Activated B cell treated with CpG ODN at 0.5 μM for 24 hours (primary cell): ENCODE measurements at regions of chr11 and their contacts with region 1.

Region 1: GRCh38 chr11:130002846-130003716 is 446 bp upstream of the PRDM10 start:
- DNase-seq: peak; percentile 81
- ATAC-seq: peak; percentile 71
- H3K4me3 Mint-ChIP-seq: peak overlapping the region; percentile 99
- H3K27ac Mint-ChIP-seq: peak overlapping the region; percentile 100
- H3K4me1 Mint-ChIP-seq: peaks cover 29% of the 10 kb centered on the region
- H3K27me3 Mint-ChIP-seq: peaks cover 4% of the 10 kb centered on the region
- CTCF ChIP-seq: no peak

Region 2: GRCh38 chr11:129853518-129854236 is 149.4 kb before region 1 on chr11:
- CTCF ChIA-PET with region 1: no interaction called
- POLR2A ChIA-PET with region 1: no interaction called
- intact Hi-C with region 1: no loop called
- DNase-seq: no peak
- ATAC-seq: no peak
- H3K4me3 Mint-ChIP-seq: no peak overlapping the region
- H3K27ac Mint-ChIP-seq: no peak overlapping the region
- H3K4me1 Mint-ChIP-seq: no peaks in the 10 kb centered on the region
- H3K27me3 Mint-ChIP-seq: peaks cover 2% of the 10 kb centered on the region
- CTCF ChIP-seq: no peak

Region 3: DNA sequence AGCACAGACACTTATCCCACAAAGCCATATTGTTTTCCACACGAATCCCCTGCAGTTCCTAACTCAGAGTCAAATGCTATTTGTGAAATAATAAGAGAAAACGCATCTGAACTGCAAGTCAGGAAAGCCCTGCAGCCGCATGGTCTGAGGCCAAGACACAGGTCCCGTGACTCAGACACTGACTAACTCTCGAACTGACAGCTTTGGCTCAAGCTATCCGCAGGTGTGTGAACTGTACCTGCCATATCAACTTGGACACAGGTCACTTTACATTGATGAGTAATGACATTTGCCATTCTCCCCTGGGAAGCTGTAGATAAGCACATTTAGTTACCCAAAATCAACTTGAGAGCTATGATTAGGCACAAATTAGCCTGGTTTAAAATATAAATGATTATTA is 72.8 kb before region 1 on chr11:
- CTCF ChIA-PET with region 1: no interaction called
- POLR2A ChIA-PET with region 1: interaction called, 13 read pairs
- intact Hi-C with region 1: no loop called
- DNase-seq: no peak
- ATAC-seq: no peak
- H3K4me3 Mint-ChIP-seq: no peak overlapping the region
- H3K27ac Mint-ChIP-seq: no peak overlapping the region
- H3K4me1 Mint-ChIP-seq: no peaks in the 10 kb centered on the region
- H3K27me3 Mint-ChIP-seq: no peaks in the 10 kb centered on the region
- CTCF ChIP-seq: no peak

Region 4: GRCh38 chr11:129992161-129992944 is 10.7 kb before region 1 on chr11:
- CTCF ChIA-PET with region 1: interaction called, 6 read pairs
- POLR2A ChIA-PET with region 1: interaction called, 19 read pairs
- intact Hi-C with region 1: loop called (anchors 1 kb)
- DNase-seq: no peak
- ATAC-seq: peak; percentile 71
- H3K4me3 Mint-ChIP-seq: no peak overlapping the region
- H3K27ac Mint-ChIP-seq: no peak overlapping the region
- H3K4me1 Mint-ChIP-seq: peaks cover 7% of the 10 kb centered on the region
- H3K27me3 Mint-ChIP-seq: no peaks in the 10 kb centered on the region
- CTCF ChIP-seq: no peak

Region 5: GRCh38 chr11:130069684-130070108 is 66.6 kb after region 1 on chr11 and contains the start of gene APLP2:
- CTCF ChIA-PET with region 1: interaction called, 5 read pairs
- POLR2A ChIA-PET with region 1: interaction called, 59 read pairs
- intact Hi-C with region 1: loop called (anchors 1 kb)
- DNase-seq: peak; percentile 92
- ATAC-seq: peak; percentile 94
- H3K4me3 Mint-ChIP-seq: peak within 1 kb of the TSS; percentile 92
- H3K27ac Mint-ChIP-seq: peak within 1 kb of the TSS; percentile 83
- H3K4me1 Mint-ChIP-seq: peaks cover 36% of the 10 kb centered on the region
- H3K27me3 Mint-ChIP-seq: peaks cover 8% of the 10 kb centered on the region
- CTCF ChIP-seq: no peak
- total RNA-seq, gene APLP2: 47.7 and 50.8 TPM in 2 replicates

Region 6: GRCh38 chr11:130103296-130103814 is 100.3 kb after region 1 on chr11:
- CTCF ChIA-PET with region 1: no interaction called
- POLR2A ChIA-PET with region 1: no interaction called
- intact Hi-C with region 1: no loop called
- DNase-seq: no peak
- ATAC-seq: no peak
- H3K4me3 Mint-ChIP-seq: no peak overlapping the region
- H3K27ac Mint-ChIP-seq: no peak overlapping the region
- H3K4me1 Mint-ChIP-seq: peaks cover 31% of the 10 kb centered on the region
- H3K27me3 Mint-ChIP-seq: no peaks in the 10 kb centered on the region
- CTCF ChIP-seq: no peak

Region 7: DNA sequence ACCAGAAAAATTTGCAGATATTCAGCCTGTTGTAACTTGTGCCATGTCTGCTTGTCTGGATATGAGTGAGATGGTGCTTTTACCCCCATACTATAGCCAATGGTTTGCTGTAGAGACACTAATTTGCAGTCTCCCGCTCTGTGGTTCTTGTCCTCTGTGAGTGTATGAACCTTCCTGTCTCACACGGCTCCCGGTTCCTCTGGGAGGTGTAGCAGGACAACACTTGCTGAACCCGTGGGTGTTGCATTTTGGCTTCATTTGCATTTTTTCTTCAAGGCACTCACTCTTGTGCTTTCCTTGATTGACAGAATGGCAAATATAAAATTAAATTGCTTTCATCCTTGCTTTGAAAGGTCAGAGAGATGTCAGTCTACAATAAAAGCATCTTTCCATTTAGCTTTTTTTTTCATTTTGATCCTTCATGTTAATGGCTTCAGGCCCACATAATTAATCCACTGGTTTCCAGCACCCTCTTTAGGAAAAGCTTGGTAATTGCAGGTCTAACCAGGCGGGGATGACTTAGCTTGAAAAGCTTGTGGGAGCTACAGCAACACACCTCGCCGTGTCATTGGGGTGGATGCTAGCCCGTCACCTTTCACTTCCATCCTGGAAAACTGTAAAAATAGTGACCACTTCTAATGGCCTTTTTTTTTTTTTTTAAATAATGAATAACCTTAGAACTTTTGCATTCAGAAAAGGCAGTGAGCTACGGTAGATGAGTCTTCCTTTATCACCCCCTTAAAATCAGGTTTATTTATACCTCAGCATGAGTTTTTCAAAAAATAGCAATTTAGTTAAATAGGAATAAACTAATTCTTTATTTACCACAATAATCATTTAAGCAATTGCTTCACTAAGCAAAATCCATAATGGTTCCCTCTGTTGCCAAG is 129.1 kb after region 1 on chr11:
- CTCF ChIA-PET with region 1: interaction called, 18 read pairs
- POLR2A ChIA-PET with region 1: interaction called, 25 read pairs
- intact Hi-C with region 1: loop called (anchors 2 kb)
- DNase-seq: no peak
- ATAC-seq: peak; percentile 87
- H3K4me3 Mint-ChIP-seq: no peak overlapping the region
- H3K27ac Mint-ChIP-seq: no peak overlapping the region
- H3K4me1 Mint-ChIP-seq: peaks cover 19% of the 10 kb centered on the region
- H3K27me3 Mint-ChIP-seq: no peaks in the 10 kb centered on the region
- CTCF ChIP-seq: peak; percentile 56

Region 8: GRCh38 chr11:130314750-130315285 is 311.7 kb after region 1 on chr11 and contains the start of gene ZBTB44:
- CTCF ChIA-PET with region 1: no interaction called
- POLR2A ChIA-PET with region 1: interaction called, 6 read pairs
- intact Hi-C with region 1: loop called (anchors 1 kb)
- DNase-seq: peak; percentile 76
- ATAC-seq: peak; percentile 78
- H3K4me3 Mint-ChIP-seq: peak within 1 kb of the TSS; percentile 89
- H3K27ac Mint-ChIP-seq: peak within 1 kb of the TSS; percentile 95
- H3K4me1 Mint-ChIP-seq: peaks cover 36% of the 10 kb centered on the region
- H3K27me3 Mint-ChIP-seq: no peaks in the 10 kb centered on the region
- CTCF ChIP-seq: no peak
- total RNA-seq, gene ZBTB44: 49.0 and 61.5 TPM in 2 replicates

Region 9: GRCh38 chr11:130527636-130528297 is 524.7 kb after region 1 on chr11:
- CTCF ChIA-PET with region 1: no interaction called
- POLR2A ChIA-PET with region 1: no interaction called
- intact Hi-C with region 1: no loop called
- DNase-seq: no peak
- ATAC-seq: no peak
- H3K4me3 Mint-ChIP-seq: no peak overlapping the region
- H3K27ac Mint-ChIP-seq: no peak overlapping the region
- H3K4me1 Mint-ChIP-seq: no peaks in the 10 kb centered on the region
- H3K27me3 Mint-ChIP-seq: peaks cover 5% of the 10 kb centered on the region
- CTCF ChIP-seq: no peak